H1 (cell line): ENCODE measurements at regions of chr6 and their contacts with region 1.

Region 1: GRCh38 chr6:43865932-43866645 is 96.1 kb downstream of the VEGFA start:
- DNase-seq: no peak
- H3K4me3 ChIP-seq: no peak overlapping the region
- H3K27ac ChIP-seq: no peak overlapping the region
- H3K4me1 ChIP-seq: peaks cover 0 to 13% (median 10%) of the 10 kb centered on the region in 4 experiments; a peak in 6 of 7 replicates
- H3K27me3 ChIP-seq: no peaks in the 10 kb centered on the region; a peak in 1 of 7 replicates
- CTCF ChIP-seq: no peak
- EP300 ChIP-seq: no peak
- POLR2A ChIP-seq: no peak
- RAD21 ChIP-seq: no peak

Region 2: GRCh38 chr6:43878823-43879495 is 12.9 kb after region 1 on chr6:
- CTCF ChIA-PET with region 1: interaction called, 10 read pairs
- POLR2A ChIA-PET with region 1: no interaction called
- DNase-seq: no peak
- H3K4me3 ChIP-seq: no peak overlapping the region
- H3K27ac ChIP-seq: no peak overlapping the region
- H3K4me1 ChIP-seq: peaks cover 0 to 11% (median 1%) of the 10 kb centered on the region in 4 experiments; a peak in 5 of 7 replicates
- H3K27me3 ChIP-seq: no peaks in the 10 kb centered on the region; a peak in 1 of 7 replicates
- CTCF ChIP-seq: no peak
- EP300 ChIP-seq: no peak
- POLR2A ChIP-seq: no peak
- RAD21 ChIP-seq: no peak

Region 3: DNA sequence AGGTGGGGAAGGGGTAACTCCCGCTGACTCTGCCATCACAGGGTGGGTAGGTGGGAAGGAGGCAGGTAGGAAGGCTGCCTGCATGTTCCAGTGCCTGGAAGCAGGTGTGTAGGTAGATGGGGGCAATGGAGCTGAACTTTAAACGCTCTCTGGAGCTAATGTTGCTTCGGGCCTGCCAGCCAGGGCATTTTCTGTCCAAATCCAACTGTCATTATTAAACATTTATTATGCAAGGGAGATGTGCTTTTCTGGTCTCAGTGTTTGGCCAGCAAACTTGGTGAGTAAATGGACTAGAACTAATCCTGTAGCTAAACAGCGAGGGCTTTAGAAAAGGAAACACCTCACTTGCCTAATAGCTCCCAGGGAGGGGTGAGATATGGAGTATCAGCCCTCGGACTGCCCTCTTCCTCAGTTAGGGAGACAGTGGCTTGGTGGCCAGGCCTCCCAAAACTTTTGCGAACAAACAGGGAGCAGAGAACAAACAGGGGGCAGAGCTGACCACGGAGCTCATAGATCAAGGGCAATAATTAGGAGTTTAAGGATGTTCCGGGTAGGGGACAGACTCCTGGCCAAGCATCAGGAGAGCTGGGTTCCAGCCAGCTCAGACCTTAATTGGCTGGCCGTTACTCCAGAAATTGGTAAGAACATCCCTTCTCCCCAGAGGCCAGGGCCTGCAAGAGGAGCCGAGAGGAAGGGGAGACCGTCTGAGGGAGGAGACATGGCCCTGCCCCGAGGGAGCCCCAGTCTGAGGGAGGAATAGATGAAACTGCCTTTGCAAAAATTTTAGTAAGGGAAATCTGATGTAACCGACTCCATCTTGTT is 35.0 kb after region 1 on chr6:
- CTCF ChIA-PET with region 1: no interaction called
- POLR2A ChIA-PET with region 1: no interaction called
- DNase-seq: no peak
- H3K4me3 ChIP-seq: no peak overlapping the region
- H3K27ac ChIP-seq: no peak overlapping the region
- H3K4me1 ChIP-seq: no peaks in the 10 kb centered on the region
- H3K27me3 ChIP-seq: no peaks in the 10 kb centered on the region
- CTCF ChIP-seq: no peak
- EP300 ChIP-seq: no peak
- POLR2A ChIP-seq: no peak
- RAD21 ChIP-seq: no peak